ENCODE measurements at regions of chr12 and their contacts with region 1.

Region 1: GRCh38 chr12:56104109-56104814 is at the start of gene PA2G4:
- DNase-seq: peak; percentile 99
- ATAC-seq: peak; percentile 95
- H3K4me3 Mint-ChIP-seq: peak within 1 kb of the TSS; percentile 100
- H3K27ac Mint-ChIP-seq: peak within 1 kb of the TSS; percentile 100
- H3K4me1 Mint-ChIP-seq: peaks cover 43% of the 10 kb centered on the region
- H3K27me3 Mint-ChIP-seq: no peaks in the 10 kb centered on the region
- total RNA-seq, gene PA2G4: 446 to 695 TPM

Region 2: DNA sequence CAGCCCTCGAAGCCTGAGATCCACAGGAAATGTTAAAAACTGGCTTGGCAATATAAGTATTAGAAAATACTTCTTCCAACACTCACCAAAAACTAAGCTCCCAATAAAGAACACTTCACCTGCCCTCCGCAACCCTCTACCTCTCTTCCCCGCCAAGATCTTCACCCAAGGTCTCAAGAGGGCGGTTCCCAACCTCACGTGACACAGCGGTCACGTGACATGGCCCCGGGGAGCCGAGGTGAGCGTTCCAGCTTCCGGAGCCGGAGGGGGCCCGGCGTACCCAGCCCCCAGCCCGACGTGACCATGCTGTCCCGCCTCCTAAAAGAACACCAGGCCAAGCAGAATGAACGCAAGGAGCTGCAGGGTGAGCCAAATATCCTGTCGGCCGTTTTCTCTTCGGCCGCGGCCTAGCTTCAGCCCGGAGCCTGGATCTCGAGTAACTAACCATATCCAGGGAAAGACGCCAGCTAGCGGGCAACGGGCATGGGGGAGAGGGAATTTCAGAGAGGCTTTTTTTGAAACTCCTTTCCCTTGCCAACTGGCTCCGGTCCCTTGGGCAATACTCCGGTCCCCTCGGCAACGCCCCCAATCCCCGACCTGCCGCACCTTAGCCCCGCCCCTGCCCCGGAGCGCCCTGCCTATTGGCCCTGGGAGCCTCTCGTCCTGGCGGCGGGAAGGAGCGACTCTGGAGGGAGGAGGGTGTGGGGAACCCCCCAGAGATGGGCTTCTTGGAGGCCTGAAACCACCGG is 388.3 kb before region 1 on chr12 and contains the start of gene BLOC1S1:
- CTCF ChIA-PET with region 1: no interaction called
- POLR2A ChIA-PET with region 1: interaction called, 4 read pairs
- intact Hi-C with region 1: loop called in 1 of 2 experiments (anchors 1 kb)
- DNase-seq: peak; percentile 97
- ATAC-seq: peak; percentile 94
- H3K4me3 Mint-ChIP-seq: peak within 1 kb of the TSS; percentile 86
- H3K27ac Mint-ChIP-seq: peak within 1 kb of the TSS; percentile 89
- H3K4me1 Mint-ChIP-seq: peaks cover 30% of the 10 kb centered on the region
- H3K27me3 Mint-ChIP-seq: peaks cover 2% of the 10 kb centered on the region
- total RNA-seq, gene BLOC1S1: 107 to 115 TPM

Region 3: GRCh38 chr12:55829967-55830600 is 274.2 kb before region 1 on chr12:
- CTCF ChIA-PET with region 1: no interaction called
- POLR2A ChIA-PET with region 1: interaction called, 3 read pairs
- intact Hi-C with region 1: loop called in 1 of 2 experiments (anchors 1 kb)
- DNase-seq: peak; percentile 52
- ATAC-seq: peak; percentile 37
- H3K4me3 Mint-ChIP-seq: peak overlapping the region; percentile 99
- H3K27ac Mint-ChIP-seq: peak overlapping the region; percentile 97
- H3K4me1 Mint-ChIP-seq: peaks cover 46% of the 10 kb centered on the region
- H3K27me3 Mint-ChIP-seq: no peaks in the 10 kb centered on the region

Region 4: DNA sequence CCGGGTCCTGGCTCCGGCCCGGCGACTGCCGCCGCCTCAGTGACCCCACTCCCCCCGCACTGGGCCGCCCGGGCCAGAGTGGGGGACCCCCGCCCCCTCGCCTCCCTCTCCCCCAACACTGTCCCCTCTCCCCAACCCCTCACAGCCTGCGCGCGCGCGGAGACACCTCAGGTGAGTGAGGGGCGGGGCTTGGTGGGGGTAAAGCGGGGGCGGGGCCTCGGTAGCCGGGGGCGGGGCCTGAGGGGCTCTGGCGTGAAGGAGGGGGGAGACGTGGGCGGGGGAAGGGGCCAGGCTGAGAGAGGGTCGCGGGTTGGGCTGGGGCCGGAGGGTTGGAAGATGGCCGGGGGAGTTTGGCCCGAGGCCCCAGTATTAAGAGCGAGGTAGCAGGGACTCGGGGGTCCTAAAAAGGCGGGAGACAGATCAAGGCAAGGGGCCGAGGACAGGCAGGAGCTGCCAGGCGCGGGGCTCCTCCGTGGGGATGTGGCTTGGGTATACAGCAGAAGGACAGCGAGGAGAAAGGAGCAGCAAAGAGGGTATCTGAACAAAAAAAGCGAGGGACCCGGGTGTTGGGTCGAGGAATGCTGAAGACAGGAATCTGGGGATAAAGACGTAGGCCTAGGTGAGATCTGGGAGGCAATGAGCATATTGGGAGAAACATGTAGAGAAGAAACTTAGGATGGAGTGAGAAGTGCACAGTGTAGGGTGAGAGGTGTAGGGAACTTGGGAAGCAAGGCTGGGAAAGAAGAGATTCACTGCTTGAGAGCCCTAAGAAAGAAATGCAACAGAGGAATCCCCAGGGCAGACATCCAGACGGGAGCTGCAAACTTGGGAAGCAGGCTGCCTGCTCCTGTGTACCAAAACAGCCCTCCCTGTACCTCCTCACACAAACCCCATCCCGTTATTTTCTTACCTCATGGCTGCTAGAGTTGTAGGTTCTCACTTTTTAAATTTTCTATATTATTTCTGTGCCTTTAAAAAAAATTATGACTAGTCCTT is 96.4 kb before region 1 on chr12:
- CTCF ChIA-PET with region 1: interaction called, 3 read pairs
- POLR2A ChIA-PET with region 1: interaction called, 3 read pairs
- intact Hi-C with region 1: loop called in 1 of 2 experiments (anchors 1 kb)
- DNase-seq: peak; percentile 82
- ATAC-seq: peak; percentile 83
- H3K4me3 Mint-ChIP-seq: peak overlapping the region; percentile 78
- H3K27ac Mint-ChIP-seq: peak overlapping the region; percentile 92
- H3K4me1 Mint-ChIP-seq: peaks cover 28% of the 10 kb centered on the region
- H3K27me3 Mint-ChIP-seq: no peaks in the 10 kb centered on the region

Region 5: DNA sequence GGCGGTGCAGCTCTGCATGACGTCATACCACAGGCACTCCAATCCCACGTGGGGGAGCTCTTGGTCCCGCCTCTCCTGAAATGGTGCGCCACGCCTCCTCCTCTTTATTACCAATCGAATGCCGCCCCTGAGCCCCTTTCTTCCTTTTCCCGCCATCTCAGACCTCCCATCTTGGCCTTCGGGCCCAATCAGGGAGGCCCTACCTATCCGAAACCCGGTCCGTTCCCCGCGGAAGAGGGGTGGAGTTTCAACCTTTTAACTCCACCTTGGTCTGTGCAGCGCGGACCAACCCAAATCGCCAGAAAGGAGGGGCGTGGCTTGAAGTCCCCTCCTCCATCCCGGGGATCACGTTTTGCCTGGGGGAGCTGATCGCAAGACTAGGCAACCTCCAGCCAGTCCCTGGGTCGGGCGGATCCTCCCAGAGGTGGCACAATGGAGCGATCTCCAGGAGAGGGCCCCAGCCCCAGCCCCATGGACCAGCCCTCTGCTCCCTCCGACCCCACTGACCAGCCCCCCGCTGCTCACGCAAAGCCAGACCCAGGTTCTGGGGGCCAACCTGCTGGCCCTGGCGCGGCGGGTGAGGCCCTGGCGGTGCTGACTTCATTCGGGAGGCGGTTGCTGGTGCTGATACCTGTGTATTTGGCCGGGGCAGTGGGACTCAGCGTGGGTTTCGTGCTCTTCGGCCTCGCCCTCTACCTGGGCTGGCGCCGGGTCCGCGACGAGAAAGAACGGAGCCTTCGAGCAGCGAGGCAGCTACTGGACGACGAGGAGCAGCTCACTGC is 23.8 kb after region 1 on chr12 and contains the start of gene ESYT1:
- CTCF ChIA-PET with region 1: interaction called, 9 read pairs
- POLR2A ChIA-PET with region 1: interaction called, 17 read pairs
- intact Hi-C with region 1: loop called (anchors 1 kb)
- DNase-seq: peak; percentile 98
- ATAC-seq: peak; percentile 96
- H3K4me3 Mint-ChIP-seq: peak within 1 kb of the TSS; percentile 93
- H3K27ac Mint-ChIP-seq: peak within 1 kb of the TSS; percentile 95
- H3K4me1 Mint-ChIP-seq: peaks cover 55% of the 10 kb centered on the region
- H3K27me3 Mint-ChIP-seq: no peaks in the 10 kb centered on the region
- total RNA-seq, gene ESYT1: 132 to 160 TPM

Region 6: DNA sequence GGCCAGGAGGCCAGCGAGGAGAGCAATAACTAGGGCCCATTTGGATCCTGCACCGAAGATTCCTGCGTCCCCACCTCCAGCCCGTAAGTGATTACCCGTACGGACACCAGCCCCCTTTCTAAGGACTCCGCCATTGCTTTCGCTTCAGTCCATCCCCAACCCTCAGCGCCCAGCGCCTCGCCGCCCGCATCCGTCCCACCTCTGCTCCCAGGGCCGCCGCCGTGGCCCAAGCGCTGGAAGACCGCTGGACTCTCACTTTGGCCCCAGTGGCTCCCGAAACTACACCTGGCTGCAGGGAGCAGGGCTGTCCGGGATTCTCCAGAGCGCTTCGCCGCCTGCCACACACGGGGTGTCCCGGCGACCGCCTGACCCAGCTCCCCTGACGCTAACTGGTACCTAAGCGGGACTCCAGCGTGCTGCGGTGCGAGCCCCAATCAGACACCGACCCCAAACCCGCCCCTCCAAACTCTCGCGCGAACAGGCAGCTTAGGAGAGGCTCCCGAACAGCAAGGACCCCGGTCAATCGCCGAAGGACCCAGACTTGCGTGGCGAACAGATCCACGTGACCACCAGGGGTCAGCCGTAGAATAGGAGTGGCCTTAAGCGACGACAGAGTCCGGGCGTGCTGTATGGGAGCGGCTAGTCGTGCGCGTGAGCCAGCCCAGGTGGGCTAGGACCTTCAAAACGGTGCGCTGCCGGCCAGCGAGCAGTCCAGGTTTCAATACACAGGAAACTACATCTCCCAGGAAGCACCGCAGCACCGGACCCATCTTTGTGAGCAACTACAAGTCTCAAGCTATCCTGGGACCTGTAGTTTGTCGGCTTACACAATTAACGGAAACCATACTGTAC is 211.6 kb after region 1 on chr12 and contains the start of gene CNPY2:
- CTCF ChIA-PET with region 1: no interaction called
- POLR2A ChIA-PET with region 1: no interaction called
- intact Hi-C with region 1: loop called in 1 of 2 experiments (anchors 1 kb)
- DNase-seq: peak; percentile 95
- ATAC-seq: peak; percentile 93
- H3K4me3 Mint-ChIP-seq: peak within 1 kb of the TSS; percentile 97
- H3K27ac Mint-ChIP-seq: peak within 1 kb of the TSS; percentile 95
- H3K4me1 Mint-ChIP-seq: peaks cover 18% of the 10 kb centered on the region
- H3K27me3 Mint-ChIP-seq: no peaks in the 10 kb centered on the region
- total RNA-seq, gene CNPY2: 77.4 to 82.6 TPM

Measured in activated CD4-positive, alpha-beta T cell treated with anti-CD3 and anti-CD28 coated beads for 36 hours (primary cell).